Naive thymus-derived CD4-positive, alpha-beta T cell (primary cell): ENCODE measurements at regions of chrX and their contacts with region 1.

Region 1: GRCh38 chrX:69493193-69493592 is 10.9 kb upstream of the NALF2 start:
- DNase-seq: peak in 6 of 9 donors; percentile 16 to 30 (median 19)
- ATAC-seq: no peak
- H3K4me3 ChIP-seq: no peak overlapping the region
- H3K4me3 Mint-ChIP-seq: no peak overlapping the region
- H3K27ac ChIP-seq: no peak overlapping the region
- H3K27ac Mint-ChIP-seq: no peak overlapping the region
- H3K4me1 ChIP-seq: no peaks in the 10 kb centered on the region
- H3K4me1 Mint-ChIP-seq: no peaks in the 10 kb centered on the region
- H3K27me3 ChIP-seq: peaks cover 0 to 4% of the 10 kb centered on the region in 2 donors
- H3K27me3 Mint-ChIP-seq: peaks cover 2 to 24% (median 19%) of the 10 kb centered on the region in 5 donors

Region 2: DNA sequence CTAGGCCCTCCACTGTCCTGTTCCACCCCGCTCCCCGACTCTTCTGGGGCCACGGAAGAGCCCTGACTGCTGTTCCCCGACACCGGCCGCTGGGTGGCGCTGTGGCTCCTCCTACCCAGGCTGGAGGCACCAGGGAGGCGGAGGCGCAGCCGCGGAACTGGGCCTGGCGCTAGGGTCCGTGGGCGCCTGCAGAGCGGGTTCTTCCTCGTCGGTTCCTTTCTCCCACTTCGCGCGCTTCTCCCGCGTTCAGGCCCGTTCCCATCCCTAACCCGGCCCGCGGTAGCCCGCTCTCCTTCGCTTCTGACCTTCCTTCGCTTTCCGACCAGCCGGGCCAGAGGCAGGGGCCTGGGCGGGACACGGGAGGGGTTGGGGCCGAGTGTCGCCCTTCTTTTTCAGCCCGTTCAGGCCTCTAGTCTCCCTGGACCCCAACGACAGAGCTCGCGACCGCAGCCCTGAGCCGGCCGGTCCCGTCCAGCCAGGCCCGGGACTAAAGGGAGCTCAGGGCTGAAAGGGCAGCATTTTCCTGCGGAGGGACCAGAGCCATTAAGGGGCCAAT is 45.2 kb after region 1 on chrX:
- CTCF ChIA-PET with region 1: no interaction called
- POLR2A ChIA-PET with region 1: no interaction called
- intact Hi-C with region 1: loop called in 1 of 2 experiments (anchors 1 kb)
- DNase-seq: peak; percentile 30 to 79 (median 58)
- ATAC-seq: peak; percentile 90
- H3K4me3 ChIP-seq: no peak overlapping the region
- H3K4me3 Mint-ChIP-seq: peak overlapping the region in 8 of 10 donors; percentile 14 to 77 (median 61)
- H3K27ac ChIP-seq: no peak overlapping the region
- H3K27ac Mint-ChIP-seq: peak overlapping the region in 1 of 9 donors; percentile 34
- H3K4me1 ChIP-seq: peaks cover 3 to 10% of the 10 kb centered on the region in 2 donors
- H3K4me1 Mint-ChIP-seq: peaks cover 4 to 17% (median 11%) of the 10 kb centered on the region in 7 donors
- H3K27me3 ChIP-seq: no peaks in the 10 kb centered on the region
- H3K27me3 Mint-ChIP-seq: peaks cover 0 to 9% (median 6%) of the 10 kb centered on the region in 5 donors